Lower leg skin (tissue), 4 donors: ENCODE measurements at regions of chr1 and their contacts with region 1.

Region 1: DNA sequence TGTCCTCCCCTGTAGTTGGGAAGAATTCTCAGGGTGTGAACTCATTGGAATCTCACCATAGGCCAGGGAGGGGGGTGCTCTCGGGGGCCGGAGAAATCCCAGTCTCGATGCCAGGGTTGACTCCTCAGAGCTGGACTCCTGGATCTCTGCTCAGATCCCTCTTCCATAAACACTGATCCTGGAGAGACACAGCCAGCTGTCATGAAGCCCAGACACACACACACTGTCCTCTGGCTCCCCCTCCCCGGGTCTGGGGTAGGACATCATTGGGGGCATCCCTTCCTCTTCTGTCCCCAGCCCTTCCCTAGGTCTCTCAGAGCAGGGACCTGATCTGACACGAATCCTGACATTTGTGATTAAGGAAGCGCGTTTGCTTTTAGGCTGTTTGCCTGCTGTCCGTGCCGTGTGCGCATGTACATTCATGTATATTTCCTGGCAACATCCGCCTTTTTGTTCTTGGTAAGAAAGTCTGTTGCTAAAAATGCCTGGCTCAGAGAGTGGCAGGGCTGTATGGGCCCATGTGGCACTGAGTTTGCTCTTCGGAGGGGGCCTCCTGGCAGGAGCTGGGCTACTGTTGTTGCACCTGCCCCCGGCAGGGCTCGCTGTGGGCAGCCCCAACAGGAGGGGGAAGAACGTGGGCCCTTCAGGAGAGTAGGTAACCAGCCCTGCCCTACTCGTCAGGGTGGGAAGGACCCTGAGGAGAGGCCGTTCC is 45.4 kb upstream of the SELENON start:
- DNase-seq: no peak
- H3K4me3 ChIP-seq: no peak overlapping the region
- CTCF ChIP-seq: no peak
- POLR2A ChIP-seq: no peak

Region 2: GRCh38 chr1:25442178-25442577 is 312.4 kb before region 1 on chr1:
- intact Hi-C with region 1: no loop called
- DNase-seq: no peak
- H3K4me3 ChIP-seq: no peak overlapping the region
- CTCF ChIP-seq: no peak
- POLR2A ChIP-seq: no peak

Region 3: GRCh38 chr1:25727635-25728330 is 26.8 kb before region 1 on chr1:
- intact Hi-C with region 1: no loop called
- DNase-seq: peak in 1 of 2 donors; percentile 51
- H3K4me3 ChIP-seq: no peak overlapping the region
- CTCF ChIP-seq: no peak
- POLR2A ChIP-seq: no peak

Region 4: GRCh38 chr1:25819576-25820246 is 65.1 kb after region 1 on chr1 and contains the start of gene MTFR1L:
- intact Hi-C with region 1: loop called (anchors 10 kb)
- DNase-seq: peak; percentile 87 to 98
- H3K4me3 ChIP-seq: peak within 1 kb of the TSS; percentile 91
- CTCF ChIP-seq: no peak
- POLR2A ChIP-seq: peak in 1 of 2 donors; percentile 60
- total RNA-seq, gene MTFR1L: 34.9 to 46.1 (median 39.7) TPM

Region 5: DNA sequence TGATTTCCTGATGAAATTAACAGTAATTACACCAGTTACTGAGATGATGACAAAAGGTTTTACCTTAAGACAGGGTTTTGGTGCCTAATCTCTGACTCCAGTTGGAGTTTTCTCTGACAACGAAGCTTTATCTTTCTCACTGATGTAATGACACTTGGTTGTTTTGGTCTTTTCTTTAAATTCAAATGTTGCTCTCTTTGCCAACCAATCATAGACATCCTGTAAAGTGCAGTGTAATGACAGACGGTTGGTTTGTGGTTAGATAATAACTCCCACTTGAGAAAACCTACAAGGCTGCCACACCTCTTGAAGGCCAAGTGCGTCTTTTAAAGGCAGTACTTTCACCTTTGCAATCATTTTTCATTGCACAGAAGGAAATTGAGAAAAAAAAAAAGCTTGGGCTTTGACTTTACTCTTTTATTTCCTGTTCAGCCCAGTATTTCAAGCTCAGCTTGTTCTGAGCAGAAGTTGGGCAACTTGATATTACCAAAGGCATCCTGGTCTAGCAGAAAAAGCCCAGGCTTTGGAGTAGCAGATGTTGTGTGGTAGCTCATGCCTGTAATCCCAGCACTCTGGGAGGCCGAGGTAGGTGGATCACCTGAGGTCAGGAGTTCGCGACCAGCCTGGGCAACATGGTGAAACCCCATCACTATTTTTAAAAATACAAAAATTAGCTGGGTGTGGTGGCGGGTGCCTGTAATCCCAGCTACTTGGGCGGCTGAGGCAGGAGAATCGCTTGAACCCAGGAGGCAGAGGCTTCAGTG is 371.9 kb after region 1 on chr1:
- intact Hi-C with region 1: no loop called
- DNase-seq: peak in 1 of 2 donors; percentile 43
- H3K4me3 ChIP-seq: no peak overlapping the region
- CTCF ChIP-seq: no peak
- POLR2A ChIP-seq: no peak

Region 6: GRCh38 chr1:26156704-26157038 is 402.0 kb after region 1 on chr1:
- intact Hi-C with region 1: no loop called
- DNase-seq: peak in 1 of 2 donors; percentile 84
- H3K4me3 ChIP-seq: no peak overlapping the region
- CTCF ChIP-seq: no peak
- POLR2A ChIP-seq: no peak